ENCODE measurements at regions of chrX and their contacts with region 1.

Region 1: DNA sequence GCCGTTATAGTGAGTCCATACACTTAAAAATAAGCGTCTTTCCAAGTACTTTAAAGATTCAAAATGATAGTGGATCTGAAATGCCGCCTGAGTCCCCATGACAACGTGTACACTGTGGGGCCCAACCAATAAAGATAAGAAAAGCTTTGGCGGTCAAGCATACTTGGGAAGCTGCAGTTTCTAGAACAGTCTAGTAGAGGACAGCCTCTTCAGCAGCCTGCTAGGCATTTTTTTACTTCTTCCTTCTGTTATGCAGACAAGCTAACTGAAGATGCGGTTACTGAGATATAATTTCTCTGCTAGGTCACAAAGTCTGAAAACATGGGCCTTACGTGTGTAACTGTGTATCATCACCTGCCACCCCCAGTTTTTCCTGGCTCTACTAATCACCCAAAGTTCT is 402 bp upstream of the UPRT start:
- DNase-seq: peak; percentile 26
- H3K4me3 Mint-ChIP-seq: peak overlapping the region; percentile 85
- H3K27ac Mint-ChIP-seq: peak overlapping the region; percentile 91
- H3K4me1 Mint-ChIP-seq: peaks cover 43% of the 10 kb centered on the region
- H3K27me3 Mint-ChIP-seq: no peaks in the 10 kb centered on the region

Region 2: DNA sequence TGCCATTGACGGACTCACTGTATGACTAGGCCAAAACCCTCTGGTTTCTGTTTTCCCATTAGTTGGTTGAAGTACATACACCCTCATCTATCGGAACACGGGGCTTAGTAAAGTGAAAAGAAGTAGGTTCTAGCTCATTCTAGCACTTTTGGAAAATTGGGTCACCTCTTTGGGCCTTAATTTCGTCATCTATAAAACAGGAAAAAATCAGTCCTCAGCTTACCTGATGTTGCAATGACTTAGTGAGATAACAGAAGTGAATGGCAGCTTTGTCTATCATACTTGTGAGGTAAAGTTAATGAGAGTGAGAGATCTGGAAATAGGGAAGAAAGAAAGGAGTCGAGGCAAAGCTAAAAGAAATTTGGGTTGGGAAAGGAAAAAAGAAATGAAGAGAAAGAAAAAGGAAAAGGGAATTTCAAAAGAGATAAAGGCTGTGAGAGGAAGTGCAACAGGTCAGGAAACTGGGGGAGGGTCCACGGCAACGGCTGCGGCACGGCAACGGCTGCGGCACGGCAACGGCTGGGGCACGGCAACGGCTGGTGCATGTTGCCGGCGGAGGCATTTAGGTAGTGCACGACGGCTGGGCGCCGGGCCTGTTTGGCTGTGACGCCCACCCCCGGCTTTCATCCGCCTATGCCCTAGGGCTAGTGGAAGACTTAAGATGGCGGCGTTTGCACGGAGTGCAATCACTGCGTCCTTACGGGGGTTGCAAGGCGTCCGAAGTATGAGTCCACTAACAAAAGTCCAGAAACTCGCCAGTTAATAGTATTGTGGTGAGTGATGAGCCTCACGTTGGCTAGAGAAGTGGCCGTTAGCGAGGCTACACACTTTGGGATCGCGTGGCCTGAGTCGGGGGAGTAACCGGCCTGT is 1329.6 kb before region 1 on chrX:
- CTCF ChIA-PET with region 1: no interaction called
- intact Hi-C with region 1: loop called (anchors 10 kb)
- DNase-seq: peak; percentile 87
- H3K4me3 Mint-ChIP-seq: peak overlapping the region; percentile 94
- H3K27ac Mint-ChIP-seq: peak overlapping the region; percentile 95
- H3K4me1 Mint-ChIP-seq: peaks cover 21% of the 10 kb centered on the region
- H3K27me3 Mint-ChIP-seq: no peaks in the 10 kb centered on the region

Region 3: GRCh38 chrX:74450803-74451449 is 822.6 kb before region 1 on chrX:
- CTCF ChIA-PET with region 1: no interaction called
- intact Hi-C with region 1: loop called (anchors 10 kb)
- DNase-seq: peak; percentile 45
- H3K4me3 Mint-ChIP-seq: no peak overlapping the region
- H3K27ac Mint-ChIP-seq: peak overlapping the region; percentile 51
- H3K4me1 Mint-ChIP-seq: peaks cover 22% of the 10 kb centered on the region
- H3K27me3 Mint-ChIP-seq: no peaks in the 10 kb centered on the region

Region 4: GRCh38 chrX:74902806-74903205 is 370.7 kb before region 1 on chrX:
- CTCF ChIA-PET with region 1: no interaction called
- intact Hi-C with region 1: no loop called
- DNase-seq: no peak
- H3K4me3 Mint-ChIP-seq: no peak overlapping the region
- H3K27ac Mint-ChIP-seq: no peak overlapping the region
- H3K4me1 Mint-ChIP-seq: no peaks in the 10 kb centered on the region
- H3K27me3 Mint-ChIP-seq: no peaks in the 10 kb centered on the region

Region 5: DNA sequence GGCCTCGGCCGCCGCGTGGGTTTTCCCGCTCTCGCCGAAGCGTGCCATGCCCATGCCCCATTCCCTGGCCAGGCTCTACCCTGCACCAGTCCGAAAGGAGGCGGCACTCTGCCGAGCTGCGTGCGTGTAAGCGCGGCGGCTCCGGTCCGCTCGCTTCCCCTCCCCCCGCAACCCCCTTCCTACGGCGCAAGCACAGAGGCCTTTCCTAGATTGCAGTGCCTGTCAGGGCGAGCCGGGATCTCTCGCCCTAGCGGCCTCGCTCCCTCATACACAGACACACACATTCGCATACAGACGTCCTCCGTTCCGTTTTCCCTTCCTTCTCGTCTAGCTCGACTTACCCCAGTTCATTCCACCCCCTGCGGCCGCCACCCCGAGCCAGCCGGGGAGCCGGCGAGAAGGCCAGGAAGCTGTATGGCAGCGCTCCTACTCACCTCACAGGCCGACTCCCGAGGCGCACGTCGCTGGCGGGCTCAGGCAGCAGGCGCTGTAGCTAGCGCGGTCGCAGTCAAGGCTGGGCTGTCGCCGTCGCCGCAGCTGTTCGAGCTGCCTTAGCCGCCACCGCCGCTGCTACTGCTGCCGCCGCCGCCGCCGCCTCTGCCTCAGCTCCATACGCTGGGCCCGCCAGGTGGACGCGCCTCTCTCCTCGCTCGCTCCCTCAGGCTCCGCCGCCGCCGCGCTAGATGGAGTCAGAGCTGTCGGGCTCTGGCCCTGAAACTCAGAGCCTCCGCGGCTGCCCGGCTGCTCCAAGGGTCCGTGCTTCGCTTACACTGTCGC is 348.8 kb before region 1 on chrX:
- CTCF ChIA-PET with region 1: no interaction called
- intact Hi-C with region 1: loop called (anchors 5 kb)
- DNase-seq: peak; percentile 47
- H3K4me3 Mint-ChIP-seq: peak overlapping the region; percentile 95
- H3K27ac Mint-ChIP-seq: peak overlapping the region; percentile 87
- H3K4me1 Mint-ChIP-seq: peaks cover 6% of the 10 kb centered on the region
- H3K27me3 Mint-ChIP-seq: peaks cover 5% of the 10 kb centered on the region

Region 6: GRCh38 chrX:74980802-74981201 is 292.7 kb before region 1 on chrX:
- CTCF ChIA-PET with region 1: no interaction called
- intact Hi-C with region 1: no loop called
- DNase-seq: no peak
- H3K4me3 Mint-ChIP-seq: no peak overlapping the region
- H3K27ac Mint-ChIP-seq: no peak overlapping the region
- H3K4me1 Mint-ChIP-seq: no peaks in the 10 kb centered on the region
- H3K27me3 Mint-ChIP-seq: no peaks in the 10 kb centered on the region

Region 7: GRCh38 chrX:75229774-75230173 is 43.7 kb before region 1 on chrX:
- CTCF ChIA-PET with region 1: no interaction called
- intact Hi-C with region 1: no loop called
- DNase-seq: no peak
- H3K4me3 Mint-ChIP-seq: no peak overlapping the region
- H3K27ac Mint-ChIP-seq: no peak overlapping the region
- H3K4me1 Mint-ChIP-seq: no peaks in the 10 kb centered on the region
- H3K27me3 Mint-ChIP-seq: no peaks in the 10 kb centered on the region

Region 8: GRCh38 chrX:75522565-75523431 is 249.3 kb after region 1 on chrX and contains the start of gene ZDHHC15:
- CTCF ChIA-PET with region 1: no interaction called
- intact Hi-C with region 1: loop called (anchors 1 kb)
- DNase-seq: peak; percentile 68
- H3K4me3 Mint-ChIP-seq: peak within 1 kb of the TSS; percentile 80
- H3K27ac Mint-ChIP-seq: peak within 1 kb of the TSS; percentile 70
- H3K4me1 Mint-ChIP-seq: peaks cover 26% of the 10 kb centered on the region
- H3K27me3 Mint-ChIP-seq: no peaks in the 10 kb centered on the region
- total RNA-seq, gene ZDHHC15: 0.17 to 0.21 TPM

Region 9: GRCh38 chrX:76127341-76127740 is 853.9 kb after region 1 on chrX:
- CTCF ChIA-PET with region 1: no interaction called
- intact Hi-C with region 1: loop called (anchors 10 kb)
- DNase-seq: no peak
- H3K4me3 Mint-ChIP-seq: no peak overlapping the region
- H3K27ac Mint-ChIP-seq: no peak overlapping the region
- H3K4me1 Mint-ChIP-seq: no peaks in the 10 kb centered on the region
- H3K27me3 Mint-ChIP-seq: no peaks in the 10 kb centered on the region

Region 10: GRCh38 chrX:76172325-76172893 is 898.9 kb after region 1 on chrX:
- CTCF ChIA-PET with region 1: no interaction called
- intact Hi-C with region 1: loop called (anchors 1 kb)
- DNase-seq: no peak
- H3K4me3 Mint-ChIP-seq: peak overlapping the region; percentile 92
- H3K27ac Mint-ChIP-seq: peak overlapping the region; percentile 93
- H3K4me1 Mint-ChIP-seq: peaks cover 53% of the 10 kb centered on the region
- H3K27me3 Mint-ChIP-seq: no peaks in the 10 kb centered on the region